Endothelial cell of umbilical vein (primary cell): ENCODE measurements at regions of chr2 and their contacts with region 1.

Region 1: GRCh38 chr2:75640621-75641121 is 5.9 kb upstream of the MRPL19 start:
- DNase-seq: peak; percentile 83
- H3K4me3 ChIP-seq: peak overlapping the region in 1 of 3 experiments; percentile 11
- H3K27ac ChIP-seq: peak overlapping the region; percentile 27
- H3K4me1 ChIP-seq: peaks cover 14% of the 10 kb centered on the region
- H3K27me3 ChIP-seq: peaks cover 12 to 17% of the 10 kb centered on the region in 2 experiments
- CTCF ChIP-seq: peak; percentile 99
- POLR2A ChIP-seq: no peak

Region 2: DNA sequence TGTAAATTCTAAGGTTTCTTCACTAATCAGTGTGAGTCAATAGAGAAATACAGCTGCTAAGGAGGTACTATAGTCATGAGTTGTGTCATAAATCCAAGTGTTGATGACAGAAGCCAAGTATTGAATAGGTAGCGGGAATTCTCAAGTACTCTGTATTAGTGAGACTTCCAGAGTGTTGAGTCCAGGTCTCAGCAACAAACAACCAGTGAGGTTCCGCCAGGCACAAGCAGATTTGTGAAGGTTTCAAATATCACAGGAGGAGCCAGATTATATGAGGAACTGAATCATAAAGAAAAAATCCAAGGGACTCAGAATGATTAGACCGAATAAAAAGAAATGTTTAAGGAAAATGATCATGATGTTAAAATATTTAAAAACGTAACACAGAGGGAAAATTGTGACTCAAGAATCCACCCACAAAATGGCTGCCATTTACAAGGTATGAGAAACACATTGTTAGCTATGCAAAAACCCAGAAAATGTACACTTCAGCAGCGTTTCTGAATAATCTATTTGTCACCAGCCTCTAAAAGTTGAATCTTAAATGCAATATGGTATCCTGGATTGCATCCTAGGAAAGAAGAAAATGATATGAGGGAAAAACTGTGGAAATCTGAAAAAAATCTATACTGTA is 52.6 kb before region 1 on chr2:
- CTCF ChIA-PET with region 1: no interaction called
- POLR2A ChIA-PET with region 1: no interaction called
- dilution Hi-C with region 1: no loop called
- intact Hi-C with region 1: no loop called
- DNase-seq: no peak
- H3K4me3 ChIP-seq: no peak overlapping the region
- H3K27ac ChIP-seq: no peak overlapping the region
- H3K4me1 ChIP-seq: no peaks in the 10 kb centered on the region
- H3K27me3 ChIP-seq: peaks cover 1 to 12% of the 10 kb centered on the region in 2 experiments
- CTCF ChIP-seq: no peak
- POLR2A ChIP-seq: no peak

Region 3: GRCh38 chr2:75667884-75668283 is 27.2 kb after region 1 on chr2:
- CTCF ChIA-PET with region 1: interaction called, 11 read pairs
- POLR2A ChIA-PET with region 1: no interaction called
- dilution Hi-C with region 1: no loop called
- intact Hi-C with region 1: no loop called
- DNase-seq: no peak
- H3K4me3 ChIP-seq: no peak overlapping the region
- H3K27ac ChIP-seq: no peak overlapping the region
- H3K4me1 ChIP-seq: no peaks in the 10 kb centered on the region
- H3K27me3 ChIP-seq: no peaks in the 10 kb centered on the region
- CTCF ChIP-seq: no peak
- POLR2A ChIP-seq: no peak

Region 4: GRCh38 chr2:75676464-75676863 is 35.8 kb after region 1 on chr2:
- CTCF ChIA-PET with region 1: interaction called, 104 read pairs
- POLR2A ChIA-PET with region 1: no interaction called
- dilution Hi-C with region 1: no loop called
- intact Hi-C with region 1: loop called (anchors 1 kb)
- DNase-seq: no peak
- H3K4me3 ChIP-seq: no peak overlapping the region
- H3K27ac ChIP-seq: no peak overlapping the region
- H3K4me1 ChIP-seq: no peaks in the 10 kb centered on the region
- H3K27me3 ChIP-seq: no peaks in the 10 kb centered on the region
- CTCF ChIP-seq: no peak
- POLR2A ChIP-seq: no peak

Region 5: DNA sequence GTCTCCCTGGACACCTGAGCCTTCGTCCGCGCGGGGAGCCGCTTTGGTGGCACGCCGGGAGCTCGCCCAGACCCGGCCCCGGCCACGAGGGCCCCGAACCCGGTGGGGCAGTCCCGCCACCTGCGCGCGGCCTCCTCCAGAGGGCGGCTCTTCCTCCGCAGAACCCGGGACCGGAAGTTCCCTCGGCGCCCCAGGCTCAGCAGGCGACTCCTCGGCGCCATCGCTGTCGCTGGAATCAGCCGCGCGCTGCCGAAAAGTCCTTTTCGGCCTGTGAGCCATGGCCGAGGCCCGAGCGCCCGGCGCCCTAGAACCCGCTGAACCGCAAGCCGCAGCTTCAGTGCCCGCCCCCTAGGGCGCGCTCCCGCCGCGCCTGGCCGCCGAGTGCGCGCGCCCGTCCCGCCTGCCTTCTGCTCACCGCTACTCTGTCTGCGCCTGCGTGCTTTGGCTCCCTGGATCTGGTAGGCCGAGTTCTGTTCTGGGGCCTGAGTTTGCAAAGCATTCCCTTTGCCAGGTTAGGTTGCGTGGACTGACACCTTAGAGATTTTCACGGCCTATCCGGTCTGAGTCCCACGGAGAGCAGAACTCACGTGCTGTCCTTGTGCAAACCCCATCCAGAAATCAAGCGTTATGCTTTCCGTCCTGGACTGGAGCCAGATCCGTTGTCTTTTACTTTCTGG is 70.0 kb after region 1 on chr2 and contains the start of gene GCFC2:
- CTCF ChIA-PET with region 1: interaction called, 32 read pairs
- POLR2A ChIA-PET with region 1: no interaction called
- dilution Hi-C with region 1: no loop called
- intact Hi-C with region 1: loop called (anchors 2 kb)
- DNase-seq: peak; percentile 92
- H3K4me3 ChIP-seq: peak within 1 kb of the TSS; percentile 46 to 98 (median 92)
- H3K27ac ChIP-seq: peak within 1 kb of the TSS; percentile 81
- H3K4me1 ChIP-seq: peaks cover 28% of the 10 kb centered on the region
- H3K27me3 ChIP-seq: peaks cover 2 to 4% of the 10 kb centered on the region in 2 experiments
- CTCF ChIP-seq: peak in 1 of 2 donors; percentile 54
- POLR2A ChIP-seq: peak; percentile 81
- total RNA-seq, gene GCFC2: 18.3 and 20.0 TPM in 2 replicates

Region 6: DNA sequence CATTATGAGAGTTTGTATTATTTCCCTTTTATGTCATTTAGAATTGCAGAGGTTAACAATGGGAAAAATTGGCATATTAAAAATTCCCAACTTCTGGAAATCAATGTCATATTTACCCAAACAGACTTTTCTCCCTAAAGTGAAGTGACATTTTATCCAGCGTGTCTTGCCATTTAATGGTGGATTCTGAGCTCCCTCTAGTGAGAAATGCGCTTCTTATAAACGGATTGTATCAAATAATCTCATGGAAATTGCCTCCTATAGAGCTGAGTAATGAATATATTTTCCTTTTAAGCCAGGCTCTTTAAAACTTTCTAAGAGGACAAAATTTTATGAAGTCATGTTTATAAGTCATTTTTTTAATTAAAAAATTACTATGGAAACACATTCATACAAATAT is 75.7 kb after region 1 on chr2:
- CTCF ChIA-PET with region 1: interaction called, 32 read pairs
- POLR2A ChIA-PET with region 1: no interaction called
- dilution Hi-C with region 1: no loop called
- intact Hi-C with region 1: loop called (anchors 1 kb)
- DNase-seq: peak; percentile 17
- H3K4me3 ChIP-seq: no peak overlapping the region
- H3K27ac ChIP-seq: no peak overlapping the region
- H3K4me1 ChIP-seq: peaks cover under 1% of the 10 kb centered on the region
- H3K27me3 ChIP-seq: peaks cover 6 to 8% of the 10 kb centered on the region in 2 experiments
- CTCF ChIP-seq: no peak
- POLR2A ChIP-seq: no peak

Region 7: DNA sequence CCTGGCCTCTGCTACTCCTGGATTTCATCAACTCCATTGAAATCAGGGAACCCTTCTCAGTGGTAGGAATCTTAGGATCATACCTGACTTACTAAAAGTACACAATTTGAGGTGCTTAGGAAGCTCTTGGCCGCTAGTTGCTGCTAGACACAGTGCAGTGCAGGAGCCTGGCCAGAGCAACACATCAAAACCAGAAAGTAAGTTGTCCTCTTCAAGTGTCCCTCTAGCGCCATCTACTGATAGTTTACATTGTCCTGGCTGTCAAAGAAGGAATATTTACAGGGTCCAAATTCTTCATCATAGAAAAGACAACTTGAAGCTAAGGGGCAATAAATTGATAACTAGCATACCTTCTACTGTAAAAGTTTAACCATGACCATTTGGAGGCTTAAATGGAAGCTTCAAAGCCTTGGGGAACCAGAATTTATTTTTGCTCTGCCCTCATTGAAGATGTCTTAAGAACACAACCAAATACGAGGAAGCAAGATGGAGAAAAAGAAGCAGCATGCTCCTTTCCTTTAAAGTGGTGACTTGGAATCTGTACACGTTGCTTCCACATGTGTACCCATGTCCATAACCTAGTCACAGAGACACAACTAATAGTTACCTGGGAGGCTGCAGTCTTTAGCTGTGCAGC is 959.2 kb after region 1 on chr2:
- CTCF ChIA-PET with region 1: interaction called, 15 read pairs
- POLR2A ChIA-PET with region 1: no interaction called
- dilution Hi-C with region 1: no loop called
- intact Hi-C with region 1: loop called (anchors 1 kb)
- DNase-seq: peak; percentile 73
- H3K4me3 ChIP-seq: no peak overlapping the region
- H3K27ac ChIP-seq: no peak overlapping the region
- H3K4me1 ChIP-seq: no peaks in the 10 kb centered on the region
- H3K27me3 ChIP-seq: no peaks in the 10 kb centered on the region
- CTCF ChIP-seq: peak; percentile 68 to 71
- POLR2A ChIP-seq: no peak